Head of caudate nucleus (tissue), 42 donors: ENCODE measurements at regions of chr10 and their contacts with region 1.

Region 1: GRCh38 chr10:36779234-36779846 is 346.1 kb upstream of the ANKRD30A start:
- DNase-seq: peak in 26 of 42 donors; percentile 24 to 79 (median 48)

Region 2: DNA sequence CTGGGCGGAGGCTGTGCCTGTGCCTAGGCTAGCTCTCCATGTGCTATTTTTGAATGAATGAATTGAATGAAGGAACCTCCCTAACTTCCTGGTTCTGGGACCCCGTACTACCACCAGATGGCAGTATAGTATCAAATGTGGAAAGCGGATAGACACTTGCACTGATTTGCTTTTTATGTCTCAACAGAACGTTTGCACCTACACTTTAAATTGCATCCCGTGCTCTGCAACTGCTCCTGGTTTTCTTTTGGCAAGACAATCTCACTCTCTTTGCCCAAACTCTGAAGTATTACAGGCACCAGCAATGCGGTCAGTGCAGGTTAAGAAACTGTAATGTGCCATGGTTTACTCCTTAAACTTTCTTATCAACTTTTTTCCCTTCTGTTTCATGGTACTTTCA is 1143.8 kb before region 1 on chr10:
- intact Hi-C with region 1: loop called (anchors 2 kb)
- DNase-seq: peak in 30 of 42 donors; percentile 21 to 86 (median 64)